Activated CD4-positive, alpha-beta T cell treated with anti-CD3 and anti-CD28 coated beads, Interleukin-2, amount 10 ng/mL, durations not matched to agents 7 days and 5 days (primary cell): ENCODE measurements at regions of chr4 and their contacts with region 1.

Region 1: DNA sequence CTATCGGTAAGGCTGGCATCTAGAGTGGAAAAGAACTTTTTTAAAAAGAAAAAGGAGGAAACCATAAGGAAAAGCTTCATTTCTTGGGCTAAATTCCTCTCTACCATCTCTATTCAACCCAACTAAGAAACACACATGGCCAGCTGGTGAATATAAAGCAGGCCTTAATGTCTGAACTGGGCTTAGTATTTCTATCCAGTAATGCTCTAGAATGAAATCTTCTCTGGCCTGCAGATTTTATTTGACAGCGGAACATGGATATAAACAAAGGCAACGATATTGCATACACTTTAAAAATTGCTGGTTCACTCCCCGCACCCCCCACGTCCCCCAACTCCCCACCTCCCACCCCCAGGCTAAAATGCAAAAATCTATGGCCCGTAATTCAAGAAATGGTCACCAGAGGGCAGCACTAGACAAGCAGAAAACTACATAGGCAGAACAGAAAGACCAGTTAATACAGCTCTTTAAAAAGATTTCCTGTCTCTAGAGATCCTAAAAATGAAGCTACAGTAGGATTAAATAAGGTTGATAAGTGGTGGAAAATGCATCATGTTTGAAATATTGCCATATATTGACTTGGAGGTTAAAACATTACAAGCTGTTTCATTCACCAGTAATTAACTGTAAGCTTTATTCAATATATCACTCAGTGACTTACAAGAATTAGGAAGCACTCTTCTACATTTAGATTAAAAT is 155.2 kb upstream of the GALNT7 start:
- DNase-seq: peak; percentile 65
- H3K4me3 Mint-ChIP-seq: no peak overlapping the region
- H3K27ac Mint-ChIP-seq: no peak overlapping the region
- H3K4me1 Mint-ChIP-seq: no peaks in the 10 kb centered on the region
- H3K27me3 Mint-ChIP-seq: peaks cover 4% of the 10 kb centered on the region

Region 2: DNA sequence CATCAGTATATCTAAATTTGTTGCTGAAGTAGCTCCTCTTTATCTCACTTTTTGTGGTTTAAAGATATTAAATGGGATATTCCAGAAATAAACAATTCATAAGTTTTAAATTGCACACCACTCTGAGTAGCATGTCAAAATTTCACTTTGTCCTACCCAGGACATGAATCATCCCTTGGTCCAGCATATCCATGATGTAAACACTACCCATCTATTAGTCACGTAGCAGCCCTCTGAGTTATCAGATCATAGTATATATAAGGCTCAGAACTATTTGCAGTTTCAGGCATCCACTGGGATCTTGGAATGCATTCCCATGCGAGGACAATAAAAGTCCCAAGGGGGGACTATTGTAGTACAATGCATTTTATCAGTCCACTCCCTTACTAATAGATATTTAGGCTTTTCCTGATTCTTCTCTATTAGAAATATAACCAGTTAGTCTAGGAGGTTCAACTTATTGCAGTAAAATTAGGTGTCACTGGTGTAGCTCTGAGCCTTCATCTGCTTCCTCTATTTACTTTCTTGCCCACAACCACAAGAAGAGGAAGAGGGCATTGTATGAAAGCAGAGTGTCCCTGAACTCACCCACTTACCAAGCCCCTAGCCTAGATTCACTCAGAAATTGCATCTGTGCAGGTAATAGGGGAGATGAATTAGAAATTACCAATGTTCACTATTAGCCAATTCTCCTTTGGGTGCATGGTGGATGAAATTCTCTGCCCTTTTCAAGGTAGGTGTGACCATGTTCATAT is 254.6 kb before region 1 on chr4:
- CTCF ChIA-PET with region 1: no interaction called
- POLR2A ChIA-PET with region 1: no interaction called
- DNase-seq: no peak
- H3K4me3 Mint-ChIP-seq: no peak overlapping the region
- H3K27ac Mint-ChIP-seq: no peak overlapping the region
- H3K4me1 Mint-ChIP-seq: no peaks in the 10 kb centered on the region
- H3K27me3 Mint-ChIP-seq: no peaks in the 10 kb centered on the region

Region 3: DNA sequence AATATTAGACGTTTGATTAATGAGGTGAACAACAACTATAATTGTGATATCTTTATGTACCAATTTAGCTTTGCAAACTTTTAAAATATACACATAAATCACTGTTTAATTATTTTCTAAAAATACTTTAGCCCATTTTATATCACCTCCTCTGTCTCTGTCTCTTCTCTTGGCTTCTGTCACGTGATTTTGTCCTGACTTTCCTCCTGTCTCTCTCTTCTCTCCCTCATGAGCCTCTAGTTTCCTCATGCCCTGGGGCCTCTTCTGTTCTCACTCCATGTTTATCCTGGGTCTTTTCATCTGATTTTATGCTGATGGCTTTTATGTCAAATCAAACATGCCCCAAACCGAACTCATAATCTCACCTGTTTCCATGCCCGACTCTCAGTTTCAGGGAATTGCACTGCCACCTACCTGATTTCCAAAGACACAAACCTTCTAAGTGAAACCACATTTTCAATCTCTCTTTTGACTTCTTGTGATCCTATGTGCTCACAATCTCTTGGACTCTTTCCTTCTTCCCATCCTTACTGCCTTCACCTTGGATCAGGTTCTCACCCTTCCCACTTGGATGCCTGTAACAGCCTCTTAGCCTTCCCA is 147.8 kb before region 1 on chr4:
- CTCF ChIA-PET with region 1: no interaction called
- POLR2A ChIA-PET with region 1: no interaction called
- DNase-seq: no peak
- H3K4me3 Mint-ChIP-seq: no peak overlapping the region
- H3K27ac Mint-ChIP-seq: no peak overlapping the region
- H3K4me1 Mint-ChIP-seq: no peaks in the 10 kb centered on the region
- H3K27me3 Mint-ChIP-seq: no peaks in the 10 kb centered on the region

Region 4: GRCh38 chr4:173257732-173258717 is 244.6 kb after region 1 on chr4:
- CTCF ChIA-PET with region 1: interaction called, 15 read pairs
- POLR2A ChIA-PET with region 1: no interaction called
- DNase-seq: peak; percentile 67
- H3K4me3 Mint-ChIP-seq: no peak overlapping the region
- H3K27ac Mint-ChIP-seq: no peak overlapping the region
- H3K4me1 Mint-ChIP-seq: no peaks in the 10 kb centered on the region
- H3K27me3 Mint-ChIP-seq: no peaks in the 10 kb centered on the region

Region 5: GRCh38 chr4:173334085-173334772 is 320.8 kb after region 1 on chr4 and contains the start of gene HMGB2:
- CTCF ChIA-PET with region 1: no interaction called
- POLR2A ChIA-PET with region 1: no interaction called
- DNase-seq: peak; percentile 100
- H3K4me3 Mint-ChIP-seq: peak within 1 kb of the TSS; percentile 90
- H3K27ac Mint-ChIP-seq: peak within 1 kb of the TSS; percentile 100
- H3K4me1 Mint-ChIP-seq: peaks cover 42% of the 10 kb centered on the region
- H3K27me3 Mint-ChIP-seq: no peaks in the 10 kb centered on the region
- total RNA-seq, gene HMGB2: 975 to 1,039 TPM

Region 6: DNA sequence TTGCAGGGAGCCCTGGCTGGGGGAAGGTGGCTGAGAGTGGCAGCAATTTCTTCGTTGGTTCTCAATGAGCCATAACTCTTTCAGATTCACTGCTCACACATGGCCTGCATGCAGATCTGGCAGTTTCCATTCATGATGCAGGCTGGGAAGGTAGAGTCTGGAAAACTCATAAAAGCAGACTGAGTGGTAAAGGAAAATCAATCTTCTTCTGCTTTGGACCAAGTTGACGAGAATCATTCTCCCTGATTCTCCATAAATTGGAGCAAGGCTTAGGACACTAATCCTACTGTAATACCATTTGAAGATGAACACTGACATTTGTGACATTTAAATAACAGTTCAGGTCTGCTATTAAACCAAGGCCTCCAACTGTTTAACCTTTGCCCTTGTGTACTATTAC is 551.9 kb after region 1 on chr4:
- CTCF ChIA-PET with region 1: no interaction called
- POLR2A ChIA-PET with region 1: no interaction called
- DNase-seq: no peak
- H3K4me3 Mint-ChIP-seq: no peak overlapping the region
- H3K27ac Mint-ChIP-seq: no peak overlapping the region
- H3K4me1 Mint-ChIP-seq: no peaks in the 10 kb centered on the region
- H3K27me3 Mint-ChIP-seq: no peaks in the 10 kb centered on the region